ENCODE measurements at regions of chrX and their contacts with region 1.

Region 1: DNA sequence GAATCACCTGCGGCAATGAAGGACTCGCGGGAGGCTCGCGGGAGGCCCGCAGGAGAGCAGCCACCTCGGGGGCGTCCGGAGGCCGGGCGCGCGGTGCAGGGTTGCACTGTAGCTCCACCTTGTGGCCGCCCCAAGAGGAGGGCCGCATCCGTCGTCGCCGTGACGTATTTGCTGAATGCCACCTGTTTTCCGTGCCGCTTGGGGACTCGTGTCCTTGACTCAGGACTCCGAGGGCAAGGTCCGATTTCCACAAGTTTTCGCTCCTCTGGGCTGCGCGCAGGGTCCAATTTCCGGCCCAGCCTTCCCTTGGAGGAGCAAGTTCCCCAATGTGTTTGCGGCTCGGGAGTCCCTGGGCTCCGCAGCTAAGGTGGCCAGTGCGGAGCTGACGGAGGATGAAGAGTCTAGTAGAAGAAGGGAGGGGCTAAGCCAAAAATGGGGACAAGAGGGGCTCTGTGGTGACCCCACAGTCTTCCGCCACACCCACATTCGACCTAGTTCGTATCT is 10.7 kb upstream of the DLG3 start:
- DNase-seq: no peak
- H3K4me3 ChIP-seq: peak overlapping the region; percentile 78
- H3K27ac ChIP-seq: peak overlapping the region; percentile 83
- H3K27me3 ChIP-seq: no peaks in the 10 kb centered on the region
- CTCF ChIP-seq: peak; percentile 59

Region 2: GRCh38 chrX:70454441-70455365 is 20.8 kb after region 1 on chrX:
- CTCF ChIA-PET with region 1: interaction called, 19 read pairs
- POLR2A ChIA-PET with region 1: no interaction called
- DNase-seq: no peak
- H3K4me3 ChIP-seq: peak overlapping the region; percentile 68
- H3K27ac ChIP-seq: peak overlapping the region; percentile 39
- H3K27me3 ChIP-seq: no peaks in the 10 kb centered on the region
- CTCF ChIP-seq: peak; percentile 88

Region 3: GRCh38 chrX:70554081-70554480 is 120.2 kb after region 1 on chrX:
- CTCF ChIA-PET with region 1: interaction called, 12 read pairs
- POLR2A ChIA-PET with region 1: interaction called, 3 read pairs
- DNase-seq: no peak
- H3K4me3 ChIP-seq: no peak overlapping the region
- H3K27ac ChIP-seq: no peak overlapping the region
- H3K27me3 ChIP-seq: no peaks in the 10 kb centered on the region
- CTCF ChIP-seq: peak; percentile 27; the same call in 1 of the 2 replicates

Region 4: DNA sequence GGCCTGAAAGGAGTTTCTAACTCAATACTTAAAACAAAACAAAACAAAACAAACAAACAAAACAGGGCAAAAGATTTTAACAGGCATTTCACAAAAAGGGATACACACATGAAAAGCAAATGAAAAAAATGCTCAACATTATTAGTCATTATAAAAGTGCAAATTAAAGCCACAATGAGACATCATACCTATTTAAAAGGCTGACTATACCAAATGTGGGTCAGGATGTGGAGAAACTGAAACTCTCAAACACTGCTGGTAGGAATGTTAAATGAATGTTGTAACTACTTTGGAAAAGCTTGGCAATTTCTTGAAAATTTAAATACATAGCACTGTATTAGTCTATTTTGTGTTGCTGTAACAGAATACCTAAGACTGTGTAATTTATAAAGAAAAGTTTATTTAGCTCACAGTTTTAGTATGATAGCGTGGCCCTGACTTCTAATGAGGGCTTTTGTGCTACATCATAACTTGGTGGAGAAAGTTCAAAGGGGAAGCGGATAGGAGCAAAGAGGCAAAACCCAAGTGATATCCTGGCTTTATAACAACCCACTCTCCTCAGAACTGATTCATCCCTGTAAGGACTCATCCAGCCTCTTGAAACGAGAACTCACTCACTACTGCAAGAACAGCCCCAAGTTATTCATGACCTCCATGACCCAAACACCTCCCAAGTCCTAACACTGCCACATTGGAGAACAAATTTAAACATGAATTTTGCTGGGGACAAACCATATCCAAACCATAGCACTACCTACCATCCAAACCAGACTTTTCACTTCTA is 260.6 kb after region 1 on chrX:
- CTCF ChIA-PET with region 1: no interaction called
- POLR2A ChIA-PET with region 1: no interaction called
- DNase-seq: no peak
- H3K4me3 ChIP-seq: no peak overlapping the region
- H3K27ac ChIP-seq: no peak overlapping the region
- H3K27me3 ChIP-seq: no peaks in the 10 kb centered on the region
- CTCF ChIP-seq: no peak